ENCODE measurements at regions of chr1 and their contacts with region 1.

Region 1: GRCh38 chr1:86846166-86846647 is 67.7 kb downstream of the SELENOF start:
- DNase-seq: no peak
- H3K4me3 ChIP-seq: no peak overlapping the region
- H3K27ac ChIP-seq: no peak overlapping the region
- H3K4me1 ChIP-seq: peaks cover 9% of the 10 kb centered on the region
- H3K27me3 ChIP-seq: no peaks in the 10 kb centered on the region
- CTCF ChIP-seq: no peak
- POLR2A ChIP-seq: no peak

Region 2: DNA sequence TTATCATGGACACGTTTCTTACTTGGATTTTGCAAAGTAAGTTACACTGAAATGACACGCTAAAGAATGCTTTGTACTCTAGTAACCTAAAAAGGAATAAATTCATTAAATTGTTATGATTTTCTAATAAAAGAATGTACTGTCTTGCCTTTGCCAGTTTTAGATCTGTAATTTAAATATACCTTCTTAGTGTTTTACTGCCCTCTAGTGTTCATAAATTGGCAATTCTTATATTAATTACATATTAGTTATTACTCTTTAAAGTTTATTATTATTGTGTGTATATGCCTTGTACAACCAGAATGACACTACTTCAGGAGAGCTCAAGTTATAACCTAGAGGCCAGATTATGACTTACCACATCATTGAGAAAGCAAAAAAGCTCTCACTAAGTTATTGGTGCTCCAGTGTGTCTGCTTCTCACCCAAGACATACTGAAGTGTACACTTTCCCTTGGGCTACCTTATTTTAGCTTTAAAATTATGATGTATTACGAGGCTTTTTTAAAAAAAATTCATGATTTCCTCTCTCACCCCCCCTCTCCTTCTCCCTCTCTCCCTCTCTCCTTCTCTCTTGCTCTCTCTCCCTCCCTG is 238.1 kb after region 1 on chr1:
- intact Hi-C with region 1: loop called (anchors 10 kb)
- DNase-seq: no peak
- H3K4me3 ChIP-seq: no peak overlapping the region
- H3K27ac ChIP-seq: no peak overlapping the region
- H3K4me1 ChIP-seq: no peaks in the 10 kb centered on the region
- H3K27me3 ChIP-seq: no peaks in the 10 kb centered on the region
- CTCF ChIP-seq: peak; percentile 14 to 56 (median 39)
- POLR2A ChIP-seq: no peak